ENCODE measurements at regions of chr1 and their contacts with region 1.

Region 1: DNA sequence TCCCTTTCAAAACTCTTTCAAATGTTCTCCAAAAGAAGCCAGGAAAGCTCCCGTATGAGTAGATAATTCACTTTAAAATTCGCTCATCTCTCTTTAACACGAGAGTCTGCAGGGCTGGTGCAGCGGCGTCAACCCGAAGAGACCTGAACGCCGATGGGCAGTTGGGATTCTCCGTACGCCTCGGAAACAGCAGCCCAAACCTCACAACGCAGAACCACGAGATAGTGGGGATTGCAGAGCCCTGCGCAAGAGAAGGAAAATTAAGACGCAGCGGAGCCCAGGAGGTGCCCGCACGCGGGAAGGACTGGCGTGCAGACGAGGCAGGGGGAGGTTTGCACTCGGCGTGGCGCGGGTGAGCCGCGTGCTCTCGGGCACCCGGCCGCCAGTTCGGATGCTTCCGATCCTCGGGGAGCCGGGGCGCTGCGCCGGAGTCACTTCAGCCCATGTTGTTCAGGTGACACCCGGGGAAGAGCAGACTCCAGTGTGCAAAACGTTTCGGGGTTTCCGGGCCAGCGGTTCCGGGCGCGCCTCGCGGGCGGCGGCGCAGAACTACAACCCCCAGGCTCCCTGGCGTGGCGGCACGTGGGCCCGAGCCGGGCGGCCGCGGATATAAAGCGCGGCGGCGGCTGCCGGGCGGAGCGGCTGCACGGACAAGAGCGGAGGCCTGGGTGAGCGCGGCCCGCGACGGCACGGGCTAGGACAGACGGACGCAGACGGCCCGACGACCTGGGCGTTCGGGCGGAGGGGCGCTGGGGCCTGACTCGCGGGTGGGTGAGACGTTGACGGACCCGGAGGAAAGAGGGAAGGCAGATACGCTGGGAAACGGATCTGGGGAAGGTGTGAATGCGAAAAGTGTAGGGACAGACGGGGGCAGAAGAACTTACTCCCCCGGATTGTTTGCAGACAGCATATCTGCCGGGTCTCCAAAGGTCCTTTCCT is at the start of gene NPL:
- DNase-seq: peak; percentile 96
- ATAC-seq: peak; percentile 97
- total RNA-seq, gene NPL: 6.1 TPM

Region 2: GRCh38 chr1:182084487-182085316 is 704.7 kb before region 1 on chr1:
- intact Hi-C with region 1: loop called (anchors 10 kb)
- DNase-seq: peak; percentile 91
- ATAC-seq: peak; percentile 93

Region 3: DNA sequence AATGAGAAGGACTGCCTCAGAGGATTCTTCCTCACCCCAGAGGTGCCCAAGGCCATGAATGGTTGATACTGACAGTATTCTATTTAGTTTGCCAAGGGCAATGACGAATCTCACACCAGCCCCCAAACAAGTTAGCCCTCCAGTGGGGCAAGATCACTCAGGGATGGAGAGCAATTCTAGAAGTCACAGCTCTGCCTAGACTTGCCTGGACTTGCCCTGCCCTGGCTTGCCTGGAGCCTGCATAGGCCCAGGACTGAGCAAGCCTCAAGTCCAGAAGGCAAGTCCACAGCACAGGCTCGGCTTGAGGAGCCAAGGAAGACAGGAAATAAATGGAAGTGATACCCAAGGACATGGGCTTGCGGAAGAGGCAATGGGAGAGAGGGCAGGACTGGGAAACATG is 145.7 kb before region 1 on chr1:
- intact Hi-C with region 1: no loop called
- DNase-seq: no peak
- ATAC-seq: no peak